ENCODE measurements at regions of chr6 and their contacts with region 1.

Region 1: DNA sequence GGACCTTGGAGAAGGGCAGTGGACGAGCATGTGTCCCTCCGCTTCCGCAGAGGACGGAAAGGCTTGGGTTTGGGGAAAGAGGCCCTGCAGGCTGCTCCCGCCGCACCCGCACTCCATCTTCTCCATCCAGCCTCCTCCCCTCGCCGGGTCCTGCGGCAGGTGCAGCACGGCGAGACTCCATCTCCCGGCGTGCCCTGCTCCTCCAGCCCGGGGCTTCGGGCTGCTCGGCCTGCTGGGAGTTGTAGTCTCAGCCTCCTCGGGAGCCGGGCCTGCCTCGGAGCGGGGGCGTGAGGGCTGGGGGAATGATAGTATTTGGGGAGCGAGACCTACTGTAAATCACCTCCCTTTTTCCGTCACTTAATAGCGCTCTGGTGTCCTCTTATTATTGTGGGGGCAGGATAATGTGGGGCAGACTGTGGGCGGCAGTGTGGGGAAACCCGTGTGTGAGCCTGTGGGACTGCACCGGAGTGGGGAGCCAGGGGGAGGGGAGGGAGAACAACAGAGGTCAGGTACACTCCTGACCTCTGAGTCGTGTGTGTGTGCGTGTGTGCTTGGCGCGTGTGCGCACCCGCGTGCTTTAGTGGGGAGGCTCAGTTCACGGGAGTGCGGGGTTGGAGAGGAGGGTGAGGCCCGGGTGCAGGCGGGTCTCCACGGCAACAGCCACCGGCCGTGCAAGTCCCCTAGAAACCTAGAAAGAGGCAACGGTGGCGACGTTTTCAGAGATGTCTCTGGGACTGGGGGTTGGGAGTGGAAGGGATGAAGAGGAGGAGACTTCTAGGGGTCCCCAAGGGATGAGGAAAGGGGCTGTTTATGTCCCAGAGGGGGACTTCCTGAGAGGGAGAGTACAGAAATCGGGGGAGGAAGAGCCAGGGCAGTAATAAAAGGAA is 4.1 kb downstream of the TTBK1 start:
- DNase-seq: peak; percentile 75 to 92 (median 88)
- H3K4me3 ChIP-seq: peak overlapping the region; percentile 49 to 93 (median 74)
- H3K27ac ChIP-seq: peak overlapping the region; percentile 12 to 95 (median 84)
- H3K27me3 ChIP-seq: peaks cover 0 to 3% (median 0%) of the 10 kb centered on the region in 45 donors
- CTCF ChIP-seq: peak in 11 of 56 donors; percentile 6 to 28 (median 17)

Region 2: DNA sequence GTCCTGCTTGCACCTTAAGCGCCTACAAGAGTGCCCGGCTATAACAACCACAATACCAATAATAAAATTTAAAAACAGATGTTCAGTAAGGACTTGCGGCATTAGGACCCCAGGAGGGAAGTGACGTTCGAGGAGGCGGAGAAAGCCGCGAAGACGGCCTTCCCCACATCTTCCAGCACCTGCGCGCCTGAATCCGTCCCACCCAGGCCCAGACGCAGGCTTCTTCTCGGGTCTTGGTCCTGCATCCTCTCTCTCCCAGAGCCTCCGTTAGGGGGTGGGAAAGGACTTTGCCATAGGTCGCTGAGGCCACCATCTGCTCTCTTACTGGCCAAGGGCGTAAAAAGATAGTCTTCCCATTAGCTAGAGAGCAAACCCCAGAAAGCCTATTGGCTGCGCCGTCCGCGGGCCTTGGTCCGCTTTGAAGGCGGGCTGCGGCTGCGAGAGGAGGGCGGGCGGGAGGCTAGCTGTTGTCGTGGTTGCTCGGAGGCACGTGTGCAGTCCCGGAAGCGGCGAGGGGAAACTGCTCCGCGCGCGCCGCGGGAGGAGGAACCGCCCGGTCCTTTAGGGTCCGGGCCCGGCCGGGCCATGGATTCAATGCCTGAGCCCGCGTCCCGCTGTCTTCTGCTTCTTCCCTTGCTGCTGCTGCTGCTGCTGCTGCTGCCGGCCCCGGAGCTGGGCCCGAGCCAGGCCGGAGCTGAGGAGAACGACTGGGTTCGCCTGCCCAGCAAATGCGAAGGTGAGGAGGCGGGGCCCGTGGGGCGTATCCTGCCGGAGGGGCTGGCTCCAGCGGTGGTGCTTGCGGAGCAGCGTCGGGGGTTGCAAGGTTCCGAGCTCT is 318.2 kb before region 1 on chr6 and contains the start of gene CNPY3:
- intact Hi-C with region 1: loop called in 1 of 2 experiments (anchors 5 kb)
- DNase-seq: peak; percentile 79 to 96 (median 94)
- H3K4me3 ChIP-seq: peak within 1 kb of the TSS; percentile 65 to 98 (median 85)
- H3K27ac ChIP-seq: peak within 1 kb of the TSS; percentile 61 to 98 (median 93)
- H3K27me3 ChIP-seq: no peaks in the 10 kb centered on the region
- CTCF ChIP-seq: peak in 19 of 56 donors; percentile 6 to 52 (median 21)
- total RNA-seq, gene CNPY3: 33.3 to 56.8 (median 43.9) TPM

Region 3: DNA sequence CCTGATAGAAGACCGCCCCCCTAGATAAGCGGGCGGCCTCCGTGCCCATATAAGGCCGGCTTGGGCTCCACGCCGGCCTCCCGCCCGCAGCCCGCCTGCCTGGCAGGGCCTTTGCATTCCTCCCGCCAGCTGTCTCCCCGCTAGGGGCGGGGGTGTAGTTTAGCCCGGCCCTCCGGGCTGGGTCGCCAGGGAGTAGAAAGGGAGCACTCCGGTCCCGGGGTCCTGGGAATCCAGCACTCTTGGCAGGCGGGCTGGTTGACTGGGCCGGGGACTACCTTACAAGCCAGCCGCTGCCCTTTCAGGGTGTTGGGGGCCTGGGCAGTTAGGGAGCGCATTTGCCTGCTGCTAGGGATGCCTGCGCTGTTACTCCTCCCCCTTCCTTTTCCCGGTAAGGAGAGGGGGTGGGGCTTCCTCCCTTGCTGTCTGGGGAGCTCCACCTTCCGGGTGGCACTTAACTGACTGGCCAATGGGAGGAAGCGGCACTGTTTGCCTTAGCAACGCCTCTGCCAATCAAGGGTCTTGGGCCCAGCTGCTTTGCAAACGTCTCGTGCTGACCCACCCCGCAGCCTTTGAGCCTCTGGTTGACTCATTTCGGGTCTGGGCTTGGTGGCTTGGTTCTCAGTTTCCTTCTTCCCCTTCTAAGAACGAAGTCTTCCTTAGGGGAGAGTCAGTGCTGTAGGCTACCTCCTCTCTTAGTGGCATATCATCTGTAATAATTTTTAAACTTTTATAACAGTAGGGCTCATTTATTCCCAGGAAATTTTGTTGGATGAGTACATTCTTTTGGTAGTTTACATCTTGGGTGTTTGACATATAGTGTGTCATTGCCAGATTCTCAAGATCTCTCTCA is 72.9 kb before region 1 on chr6:
- intact Hi-C with region 1: loop called in 1 of 2 experiments (anchors 5 kb)
- DNase-seq: peak; percentile 88 to 99 (median 98)
- H3K4me3 ChIP-seq: peak overlapping the region; percentile 29 to 98 (median 81)
- H3K27ac ChIP-seq: peak overlapping the region; percentile 50 to 98 (median 90)
- H3K27me3 ChIP-seq: no peaks in the 10 kb centered on the region
- CTCF ChIP-seq: peak in 50 of 56 donors; percentile 8 to 67 (median 42)

Region 4: DNA sequence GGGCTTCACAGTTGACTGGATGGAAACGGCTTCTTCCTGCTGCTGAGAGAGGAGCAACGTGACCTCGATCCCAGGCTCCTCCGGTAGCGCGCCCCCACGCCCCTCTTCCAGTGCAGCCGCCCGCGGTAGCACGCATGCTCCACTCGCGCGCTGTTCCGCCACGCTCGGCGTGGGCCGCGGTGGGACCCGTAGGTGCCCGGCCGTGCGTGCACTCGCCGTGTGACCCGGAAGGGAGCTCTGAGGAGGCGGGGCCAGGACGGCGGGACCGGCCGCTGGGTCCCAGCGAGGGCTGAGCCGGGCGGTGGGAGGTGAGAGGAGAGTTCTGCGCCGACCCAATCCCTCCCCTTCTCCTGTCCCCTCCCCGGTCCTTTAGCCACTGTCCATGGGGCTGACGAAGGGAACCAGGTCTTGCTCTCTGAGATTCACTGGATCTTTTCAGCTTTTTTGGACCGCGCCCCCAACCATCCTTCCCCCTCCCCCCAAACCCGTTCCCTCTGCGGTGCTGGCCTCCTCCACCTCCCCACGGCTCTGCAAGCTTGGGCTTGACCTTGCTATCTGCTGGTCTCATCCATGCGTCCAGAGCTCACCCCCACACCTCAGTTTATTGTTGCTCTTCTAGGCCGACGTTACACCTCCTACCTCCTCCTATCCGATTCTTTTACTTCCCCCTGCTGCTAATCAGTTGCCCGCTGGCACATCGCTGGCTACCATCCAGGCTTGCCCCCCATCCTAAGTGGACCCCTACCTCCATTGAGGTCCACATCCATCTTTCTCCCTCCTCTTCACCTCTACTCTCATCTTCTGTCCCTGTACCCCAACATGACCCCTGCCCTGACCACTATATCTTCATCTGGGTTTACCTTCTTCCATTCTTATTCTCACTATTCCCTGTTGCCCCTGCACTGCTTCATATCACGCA is 65.2 kb before region 1 on chr6 and contains the start of gene CUL9:
- intact Hi-C with region 1: loop called in 1 of 2 experiments (anchors 5 kb)
- DNase-seq: peak; percentile 74 to 95 (median 86)
- H3K4me3 ChIP-seq: peak within 1 kb of the TSS; percentile 57 to 93 (median 83)
- H3K27ac ChIP-seq: peak within 1 kb of the TSS in 57 of 59 donors; percentile 24 to 91 (median 82)
- H3K27me3 ChIP-seq: no peaks in the 10 kb centered on the region
- CTCF ChIP-seq: peak in 43 of 56 donors; percentile 6 to 58 (median 34)
- total RNA-seq, gene CUL9: 57.4 to 123 (median 84.1) TPM

Region 5: GRCh38 chr6:43228951-43229802 is 18.2 kb before region 1 on chr6 and contains the start of gene DNPH1:
- intact Hi-C with region 1: loop called in 1 of 2 experiments (anchors 2 kb)
- DNase-seq: peak; percentile 62 to 93 (median 73)
- H3K4me3 ChIP-seq: peak within 1 kb of the TSS; percentile 43 to 84 (median 72)
- H3K27ac ChIP-seq: peak within 1 kb of the TSS in 48 of 59 donors; percentile 0 to 83 (median 60)
- H3K27me3 ChIP-seq: no peaks in the 10 kb centered on the region
- CTCF ChIP-seq: peak; percentile 72 to 98 (median 94)
- total RNA-seq, gene DNPH1: 18.4 to 54.6 (median 31.2) TPM

Region 6: GRCh38 chr6:43355862-43356590 is 108.7 kb after region 1 on chr6:
- intact Hi-C with region 1: loop called in 1 of 2 experiments (anchors 5 kb)
- DNase-seq: no peak
- H3K4me3 ChIP-seq: no peak overlapping the region
- H3K27ac ChIP-seq: peak overlapping the region in 1 of 59 donors; percentile 22
- H3K27me3 ChIP-seq: no peaks in the 10 kb centered on the region
- CTCF ChIP-seq: peak in 33 of 56 donors; percentile 12 to 54 (median 31)

Region 7: DNA sequence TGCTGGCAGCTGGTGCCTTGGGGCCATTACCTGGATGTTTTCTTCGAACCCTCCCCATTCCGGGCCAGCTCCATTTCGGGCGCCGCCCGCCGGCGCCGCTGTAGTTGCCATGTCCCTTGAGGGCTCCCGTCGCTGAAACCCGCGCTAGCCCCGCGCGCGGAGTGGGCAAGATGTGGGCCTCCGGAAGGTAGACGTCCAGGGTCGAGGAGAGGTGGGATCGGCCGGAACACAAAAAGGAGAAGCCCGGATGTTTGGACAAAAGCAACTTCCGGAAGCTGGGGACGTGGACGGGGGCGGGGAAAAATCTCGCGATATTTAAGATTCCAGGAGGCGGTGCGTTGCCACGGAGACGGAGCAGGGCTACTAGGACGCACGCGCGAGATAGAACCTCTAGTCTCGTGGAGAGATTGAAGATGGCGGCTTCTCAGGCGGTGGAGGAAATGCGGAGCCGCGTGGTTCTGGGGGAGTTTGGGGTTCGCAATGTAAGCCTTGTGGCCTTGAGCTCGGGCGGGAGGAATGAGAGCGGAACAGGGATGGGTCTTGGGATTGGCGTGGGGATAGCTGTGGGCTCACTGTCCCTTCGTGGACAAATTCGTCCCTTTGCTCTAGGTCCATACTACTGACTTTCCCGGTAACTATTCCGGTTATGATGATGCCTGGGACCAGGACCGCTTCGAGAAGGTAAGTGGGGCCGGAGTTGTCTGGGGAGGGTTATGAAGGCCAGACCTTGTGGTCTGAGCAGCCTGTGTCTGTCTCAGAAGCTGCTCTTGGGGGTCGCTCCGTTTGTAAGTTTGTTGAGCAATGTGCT is 269.5 kb after region 1 on chr6 and contains the starts of genes POLR1C and YIPF3:
- intact Hi-C with region 1: loop called in 1 of 2 experiments (anchors 5 kb)
- DNase-seq: peak; percentile 96 to 99 (median 98)
- H3K4me3 ChIP-seq: peak within 1 kb of the TSS; percentile 66 to 100 (median 92)
- H3K27ac ChIP-seq: peak within 1 kb of the TSS; percentile 10 to 96 (median 88)
- H3K27me3 ChIP-seq: no peaks in the 10 kb centered on the region
- CTCF ChIP-seq: peak in 21 of 56 donors; percentile 9 to 56 (median 27)
- total RNA-seq, gene POLR1C: 13.6 to 34.4 (median 23.6) TPM
- total RNA-seq, gene YIPF3: 57.9 to 94.9 (median 76.6) TPM

Region 8: GRCh38 chr6:43644931-43645612 is 397.7 kb after region 1 on chr6 and contains the start of gene RSPH9:
- intact Hi-C with region 1: no loop called
- DNase-seq: peak in 4 of 10 donors; percentile 38 to 57 (median 50)
- H3K4me3 ChIP-seq: peak within 1 kb of the TSS; percentile 2 to 68 (median 49)
- H3K27ac ChIP-seq: peak within 1 kb of the TSS in 2 of 59 donors; percentile 1 to 16
- H3K27me3 ChIP-seq: no peaks in the 10 kb centered on the region
- CTCF ChIP-seq: no peak
- total RNA-seq, gene RSPH9: 0.18 to 1.5 (median 0.52) TPM in 108 of 120 experiments, not detected in the others

Measured in dorsolateral prefrontal cortex (tissue), 120 donors.